MCF 10A (cell line): ENCODE measurements at regions of chr21 and their contacts with region 1.

Region 1: DNA sequence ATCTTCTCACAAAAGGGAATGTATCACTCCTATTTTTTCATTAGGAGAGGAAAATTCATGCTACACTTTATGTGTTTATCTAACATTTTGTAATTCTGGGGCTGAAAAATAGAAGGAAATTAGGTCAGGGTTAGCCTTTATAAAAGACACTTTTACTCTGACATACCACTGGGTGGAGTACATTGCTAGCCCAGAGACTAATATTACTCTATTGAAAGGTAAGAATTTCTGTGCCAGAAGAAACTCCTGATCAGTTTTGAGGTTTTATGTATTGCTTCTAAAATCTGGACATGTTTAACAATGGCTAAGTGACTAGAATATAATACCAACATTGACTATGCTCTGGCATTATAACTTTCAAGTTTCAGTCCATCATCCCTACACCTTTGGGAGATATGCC is 724.6 kb downstream of the USP25 start:
- DNase-seq: peak; percentile 9
- H3K4me3 Mint-ChIP-seq: no peak overlapping the region
- H3K27ac Mint-ChIP-seq: no peak overlapping the region
- H3K4me1 Mint-ChIP-seq: no peaks in the 10 kb centered on the region
- H3K27me3 Mint-ChIP-seq: no peaks in the 10 kb centered on the region
- CTCF ChIP-seq: peak; percentile 26

Region 2: GRCh38 chr21:16437586-16437985 is 16.8 kb before region 1 on chr21:
- CTCF ChIA-PET with region 1: interaction called, 4 read pairs
- POLR2A ChIA-PET with region 1: interaction called, 3 read pairs
- intact Hi-C with region 1: loop called (anchors 1 kb)
- DNase-seq: no peak
- H3K4me3 Mint-ChIP-seq: no peak overlapping the region
- H3K27ac Mint-ChIP-seq: no peak overlapping the region
- H3K4me1 Mint-ChIP-seq: no peaks in the 10 kb centered on the region
- H3K27me3 Mint-ChIP-seq: peaks cover 18% of the 10 kb centered on the region
- CTCF ChIP-seq: no peak

Region 3: DNA sequence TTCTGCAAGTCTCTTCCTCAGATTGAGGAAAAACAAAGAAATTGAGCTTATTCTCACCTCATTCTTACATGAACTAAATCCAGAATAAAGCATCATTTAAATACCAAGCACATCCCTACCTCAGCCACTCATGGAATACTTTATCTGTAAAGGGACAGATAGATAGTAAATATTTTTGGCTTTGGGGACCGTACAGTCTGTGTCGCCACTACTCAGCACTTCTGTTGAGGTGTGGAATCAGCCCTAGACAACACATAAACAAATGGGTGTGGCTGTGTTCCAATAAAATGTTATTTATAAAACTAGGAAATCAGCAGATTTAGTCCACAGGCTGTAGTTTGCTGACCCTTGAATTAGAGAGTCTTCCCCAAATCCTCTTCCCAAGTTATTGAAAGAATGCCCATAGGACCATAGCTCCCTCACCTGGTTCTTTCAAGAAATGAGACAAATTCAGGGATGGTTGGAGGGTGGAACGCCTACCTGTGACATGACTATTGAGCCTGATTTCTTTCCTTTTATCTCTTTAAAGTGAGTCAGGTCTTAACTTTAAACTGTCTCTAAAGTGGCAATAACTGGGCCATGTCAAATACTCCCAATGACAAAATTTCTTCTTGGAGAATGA is 153.9 kb after region 1 on chr21:
- CTCF ChIA-PET with region 1: interaction called, 4 read pairs
- POLR2A ChIA-PET with region 1: no interaction called
- intact Hi-C with region 1: loop called (anchors 1 kb)
- DNase-seq: peak; percentile 47
- H3K4me3 Mint-ChIP-seq: no peak overlapping the region
- H3K27ac Mint-ChIP-seq: no peak overlapping the region
- H3K4me1 Mint-ChIP-seq: no peaks in the 10 kb centered on the region
- H3K27me3 Mint-ChIP-seq: no peaks in the 10 kb centered on the region
- CTCF ChIP-seq: peak; percentile 52